AG04449 (cell line): ENCODE measurements at regions of chr2 and their contacts with region 1.

Region 1: DNA sequence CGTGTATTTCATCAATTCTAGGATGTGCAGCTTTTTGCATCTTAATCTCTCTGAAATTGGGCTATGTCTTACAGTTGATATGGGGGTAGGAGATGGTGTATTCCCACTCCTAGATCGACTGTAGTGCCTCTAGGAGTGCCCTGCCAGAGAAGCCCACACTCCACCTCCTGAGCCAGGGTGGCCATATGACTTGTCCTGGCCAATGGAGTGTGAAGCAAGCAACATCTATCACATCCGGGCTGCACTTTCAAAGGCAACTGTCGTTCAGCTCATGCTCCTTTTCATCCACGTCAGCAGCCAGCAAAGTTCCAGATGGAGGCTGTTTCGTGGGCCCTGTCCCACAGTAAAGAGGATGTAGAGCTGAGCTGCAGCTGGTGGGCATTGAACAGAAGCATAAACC is 149.4 kb upstream of the SLC1A4 start:
- DNase-seq: no peak
- H3K4me3 ChIP-seq: no peak overlapping the region
- CTCF ChIP-seq: no peak

Region 2: GRCh38 chr2:64859312-64860212 is 19.7 kb after region 1 on chr2:
- CTCF ChIA-PET with region 1: interaction called, 4 read pairs
- POLR2A ChIA-PET with region 1: interaction called, 15 read pairs
- DNase-seq: peak; percentile 80
- H3K4me3 ChIP-seq: peak overlapping the region; percentile 42
- CTCF ChIP-seq: no peak

Region 3: DNA sequence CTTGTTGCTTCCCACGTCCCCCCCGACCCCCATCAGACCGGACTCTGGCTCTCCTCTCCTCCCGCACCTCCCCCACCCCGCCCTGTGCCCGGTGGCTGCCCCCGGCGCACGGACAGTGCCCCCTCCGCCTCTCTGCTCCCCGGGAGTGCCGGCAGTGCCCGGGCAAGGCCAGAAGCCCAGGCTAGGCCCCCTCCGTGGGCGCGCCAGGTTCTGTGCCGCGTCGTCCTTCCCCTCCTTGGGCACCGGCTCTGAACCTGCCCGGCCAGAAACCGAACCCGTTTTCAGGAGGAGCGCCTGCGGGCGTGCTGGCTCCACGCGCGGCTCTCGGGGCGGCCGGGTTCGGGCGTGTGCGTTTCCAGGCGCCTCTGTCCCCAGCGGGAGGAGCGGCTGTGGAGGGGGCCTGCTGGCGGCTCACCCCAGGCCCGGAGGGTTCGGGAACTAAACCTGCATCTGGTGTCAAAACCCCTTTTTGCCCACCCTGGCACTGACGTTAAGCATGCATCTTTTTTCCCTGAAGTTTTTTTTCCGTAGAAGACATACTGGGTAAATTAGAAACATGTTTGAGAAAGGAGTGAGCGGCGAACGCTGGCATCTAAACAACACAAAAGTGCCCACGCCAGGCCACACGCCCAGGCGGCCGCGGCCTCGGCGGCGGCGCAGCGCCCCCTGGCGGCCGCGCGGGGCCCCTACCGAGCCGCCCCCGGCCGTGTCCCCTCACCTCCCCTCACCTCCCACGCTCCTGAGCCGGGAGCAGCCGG is 25.4 kb after region 1 on chr2:
- CTCF ChIA-PET with region 1: interaction called, 10 read pairs
- POLR2A ChIA-PET with region 1: interaction called, 15 read pairs
- DNase-seq: no peak
- H3K4me3 ChIP-seq: peak overlapping the region; percentile 54
- CTCF ChIP-seq: peak; percentile 46

Region 4: GRCh38 chr2:65075605-65076344 is 235.9 kb after region 1 on chr2:
- CTCF ChIA-PET with region 1: no interaction called
- POLR2A ChIA-PET with region 1: no interaction called
- DNase-seq: no peak
- H3K4me3 ChIP-seq: no peak overlapping the region
- CTCF ChIP-seq: no peak